ENCODE measurements at regions of chrX and their contacts with region 1.

Region 1: GRCh38 chrX:110317820-110318658 is at the start of gene AMMECR1:
- DNase-seq: peak; percentile 80 to 86 (median 83)
- H3K4me3 ChIP-seq: peak within 1 kb of the TSS; percentile 47 to 75
- H3K4me3 Mint-ChIP-seq: peak within 1 kb of the TSS; percentile 93 to 98 (median 96)
- H3K27ac ChIP-seq: peak within 1 kb of the TSS; percentile 68
- H3K27ac Mint-ChIP-seq: peak within 1 kb of the TSS; percentile 93 to 98 (median 97)
- H3K4me1 ChIP-seq: peaks cover 31% of the 10 kb centered on the region
- H3K4me1 Mint-ChIP-seq: peaks cover 16 to 44% (median 24%) of the 10 kb centered on the region in 4 donors
- H3K27me3 ChIP-seq: no peaks in the 10 kb centered on the region
- H3K27me3 Mint-ChIP-seq: no peaks in the 10 kb centered on the region
- total RNA-seq, gene AMMECR1: 16.4 to 21.7 TPM

Region 2: GRCh38 chrX:109536439-109537336 is 781.4 kb before region 1 on chrX and contains the start of gene NXT2:
- CTCF ChIA-PET with region 1: no interaction called
- POLR2A ChIA-PET with region 1: interaction called, 3 read pairs
- intact Hi-C with region 1: loop called (anchors 5 kb)
- DNase-seq: peak; percentile 86 to 90 (median 88)
- H3K4me3 ChIP-seq: peak within 1 kb of the TSS; percentile 71 to 78
- H3K4me3 Mint-ChIP-seq: peak within 1 kb of the TSS; percentile 87 to 98 (median 95)
- H3K27ac ChIP-seq: peak within 1 kb of the TSS; percentile 78
- H3K27ac Mint-ChIP-seq: peak within 1 kb of the TSS; percentile 92 to 99 (median 98)
- H3K4me1 ChIP-seq: peaks cover 13% of the 10 kb centered on the region
- H3K4me1 Mint-ChIP-seq: peaks cover 3 to 19% (median 12%) of the 10 kb centered on the region in 4 donors
- H3K27me3 ChIP-seq: no peaks in the 10 kb centered on the region
- H3K27me3 Mint-ChIP-seq: peaks cover 4 to 9% of the 10 kb centered on the region in 2 donors
- total RNA-seq, gene NXT2: 6.2 to 6.3 TPM

Region 3: DNA sequence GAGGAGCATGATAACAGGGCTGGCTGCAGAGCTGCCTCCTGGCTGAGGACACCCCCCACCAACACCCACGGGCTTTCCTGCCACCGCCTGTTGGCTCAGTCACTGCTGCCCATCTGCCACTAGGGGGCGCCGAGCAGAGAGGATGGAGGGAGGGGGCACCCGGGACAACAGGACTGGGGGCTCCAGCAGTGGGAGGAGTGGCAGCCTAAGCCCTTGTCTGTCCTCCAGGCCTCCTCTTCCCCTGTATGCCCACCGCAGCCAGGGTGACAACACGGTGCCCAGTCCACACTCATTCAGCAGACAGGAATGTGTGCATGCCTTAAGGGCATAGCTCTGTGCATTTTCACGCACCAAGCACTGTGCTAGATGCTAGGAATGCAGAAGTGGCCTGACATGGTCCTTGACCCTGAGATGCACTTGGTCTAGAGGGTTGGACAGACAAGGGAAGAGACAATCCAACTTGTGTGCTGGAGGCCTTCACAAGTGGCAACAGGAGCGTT is 150.0 kb before region 1 on chrX:
- CTCF ChIA-PET with region 1: interaction called, 12 read pairs
- POLR2A ChIA-PET with region 1: no interaction called
- intact Hi-C with region 1: loop called (anchors 2 kb)
- DNase-seq: peak in 4 of 5 donors; percentile 46 to 55 (median 51)
- H3K4me3 ChIP-seq: no peak overlapping the region
- H3K4me3 Mint-ChIP-seq: no peak overlapping the region
- H3K27ac ChIP-seq: no peak overlapping the region
- H3K27ac Mint-ChIP-seq: no peak overlapping the region
- H3K4me1 ChIP-seq: no peaks in the 10 kb centered on the region
- H3K4me1 Mint-ChIP-seq: peaks cover 0 to 5% (median 3%) of the 10 kb centered on the region in 4 donors
- H3K27me3 ChIP-seq: no peaks in the 10 kb centered on the region
- H3K27me3 Mint-ChIP-seq: no peaks in the 10 kb centered on the region

Region 4: GRCh38 chrX:110226931-110227330 is 91.1 kb before region 1 on chrX:
- CTCF ChIA-PET with region 1: interaction called, 7 read pairs
- POLR2A ChIA-PET with region 1: interaction called, 76 read pairs
- intact Hi-C with region 1: loop called (anchors 1 kb)
- DNase-seq: no peak
- H3K4me3 ChIP-seq: no peak overlapping the region
- H3K4me3 Mint-ChIP-seq: no peak overlapping the region
- H3K27ac ChIP-seq: no peak overlapping the region
- H3K27ac Mint-ChIP-seq: peak overlapping the region in 2 of 7 donors; percentile 15 to 68
- H3K4me1 ChIP-seq: peaks cover 36% of the 10 kb centered on the region
- H3K4me1 Mint-ChIP-seq: peaks cover 25 to 52% (median 31%) of the 10 kb centered on the region in 4 donors
- H3K27me3 ChIP-seq: no peaks in the 10 kb centered on the region
- H3K27me3 Mint-ChIP-seq: no peaks in the 10 kb centered on the region

Region 5: DNA sequence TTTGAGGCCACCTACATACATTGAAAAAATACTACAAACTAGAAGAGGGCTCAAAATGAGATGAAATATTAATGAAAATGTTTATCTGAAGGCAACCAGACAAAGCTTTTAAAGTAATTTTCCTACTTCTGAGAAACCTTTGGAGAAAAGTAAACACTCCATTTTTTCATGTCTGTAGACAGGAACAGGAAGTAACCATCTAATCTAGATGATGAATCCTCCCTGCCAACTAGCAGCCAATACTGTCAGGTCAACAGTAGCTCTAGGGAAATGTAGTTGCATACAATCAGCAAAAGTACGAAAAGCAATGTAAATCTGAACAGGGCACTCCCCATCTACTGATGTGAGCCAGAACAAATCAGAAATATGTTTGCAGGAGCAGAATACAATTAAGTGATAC is 49.2 kb before region 1 on chrX:
- CTCF ChIA-PET with region 1: no interaction called
- POLR2A ChIA-PET with region 1: interaction called, 3 read pairs
- intact Hi-C with region 1: loop called (anchors 5 kb)
- DNase-seq: peak in 1 of 5 donors; percentile 10
- H3K4me3 ChIP-seq: no peak overlapping the region
- H3K4me3 Mint-ChIP-seq: peak overlapping the region in 4 of 8 donors; percentile 30 to 78 (median 46)
- H3K27ac ChIP-seq: no peak overlapping the region
- H3K27ac Mint-ChIP-seq: peak overlapping the region in 4 of 7 donors; percentile 60 to 82 (median 66)
- H3K4me1 ChIP-seq: peaks cover 45% of the 10 kb centered on the region
- H3K4me1 Mint-ChIP-seq: peaks cover 31 to 68% (median 49%) of the 10 kb centered on the region in 4 donors
- H3K27me3 ChIP-seq: no peaks in the 10 kb centered on the region
- H3K27me3 Mint-ChIP-seq: no peaks in the 10 kb centered on the region

Region 6: GRCh38 chrX:110420771-110421499 is 102.9 kb after region 1 on chrX:
- CTCF ChIA-PET with region 1: no interaction called
- POLR2A ChIA-PET with region 1: no interaction called
- intact Hi-C with region 1: no loop called
- DNase-seq: no peak
- H3K4me3 ChIP-seq: no peak overlapping the region
- H3K4me3 Mint-ChIP-seq: no peak overlapping the region
- H3K27ac ChIP-seq: no peak overlapping the region
- H3K27ac Mint-ChIP-seq: no peak overlapping the region
- H3K4me1 ChIP-seq: no peaks in the 10 kb centered on the region
- H3K4me1 Mint-ChIP-seq: no peaks in the 10 kb centered on the region
- H3K27me3 ChIP-seq: no peaks in the 10 kb centered on the region
- H3K27me3 Mint-ChIP-seq: peaks cover 0 to 1% of the 10 kb centered on the region in 2 donors